CD4-positive, alpha-beta T cell (primary cell): ENCODE measurements at regions of chr11 and their contacts with region 1.

Region 1: DNA sequence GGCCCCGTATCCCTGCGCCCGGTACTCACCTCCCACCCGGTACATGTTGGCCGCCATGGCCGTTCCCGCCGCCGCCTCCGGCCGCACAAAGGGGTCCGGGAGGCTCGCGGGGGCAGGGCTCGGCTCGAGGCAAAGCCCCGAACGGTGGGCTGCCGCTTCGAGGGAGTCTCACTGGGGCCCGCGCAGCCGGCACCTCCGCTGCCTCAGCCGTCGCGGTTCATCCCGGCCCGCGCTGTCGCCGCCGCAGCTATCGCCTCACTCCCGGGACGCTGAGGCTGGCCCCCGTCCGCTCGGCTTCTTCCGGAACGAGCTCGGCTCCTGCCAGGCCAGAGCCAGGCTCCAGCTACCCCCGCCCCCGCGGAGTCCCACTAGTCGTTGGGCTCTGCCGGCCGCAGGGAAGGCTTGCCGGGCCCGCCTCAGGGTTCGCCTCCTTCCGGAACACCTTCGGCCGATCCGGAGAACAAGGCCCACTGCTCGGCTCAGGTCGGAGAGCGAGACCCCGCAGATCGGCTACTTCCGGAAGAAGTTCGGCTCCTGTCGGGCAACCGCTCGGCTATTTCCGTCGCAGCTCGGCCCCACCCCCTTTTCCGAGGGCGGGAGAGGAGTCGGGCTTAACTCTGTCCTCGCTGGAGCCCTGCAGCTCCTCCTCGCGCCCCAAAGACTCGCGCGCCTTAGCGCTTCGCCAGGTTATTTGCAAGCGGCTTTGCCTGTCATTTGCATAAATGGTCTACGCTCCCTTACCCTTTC is at the start of gene MTA2:
- DNase-seq: peak; percentile 98 to 100 (median 99)
- ATAC-seq: peak; percentile 79
- H3K4me3 ChIP-seq: peak within 1 kb of the TSS; percentile 100
- H3K4me3 Mint-ChIP-seq: peak within 1 kb of the TSS; percentile 94
- H3K27ac ChIP-seq: peak within 1 kb of the TSS; percentile 85 to 94
- H3K27ac Mint-ChIP-seq: peak within 1 kb of the TSS; percentile 93
- H3K4me1 ChIP-seq: peaks cover 46% of the 10 kb centered on the region
- H3K4me1 Mint-ChIP-seq: peaks cover 56% of the 10 kb centered on the region
- H3K27me3 ChIP-seq: no peaks in the 10 kb centered on the region
- H3K27me3 Mint-ChIP-seq: no peaks in the 10 kb centered on the region
- CTCF ChIP-seq: no peak
- total RNA-seq, gene MTA2: 167 to 172 TPM

Region 2: GRCh38 chr11:62621567-62622470 is 20.3 kb after region 1 on chr11 and contains the start of gene B3GAT3:
- CTCF ChIA-PET with region 1: no interaction called
- POLR2A ChIA-PET with region 1: interaction called, 36 read pairs
- intact Hi-C with region 1: no loop called
- DNase-seq: peak; percentile 91 to 99 (median 95)
- ATAC-seq: peak; percentile 82
- H3K4me3 ChIP-seq: peak within 1 kb of the TSS; percentile 69
- H3K4me3 Mint-ChIP-seq: peak within 1 kb of the TSS; percentile 95
- H3K27ac ChIP-seq: peak within 1 kb of the TSS; percentile 86 to 88
- H3K27ac Mint-ChIP-seq: peak within 1 kb of the TSS; percentile 89
- H3K4me1 ChIP-seq: peaks cover 32% of the 10 kb centered on the region
- H3K4me1 Mint-ChIP-seq: peaks cover 27% of the 10 kb centered on the region
- H3K27me3 ChIP-seq: no peaks in the 10 kb centered on the region
- H3K27me3 Mint-ChIP-seq: no peaks in the 10 kb centered on the region
- CTCF ChIP-seq: no peak
- total RNA-seq, gene B3GAT3: 47.2 to 49.5 TPM

Region 3: GRCh38 chr11:62652161-62653006 is 50.8 kb after region 1 on chr11:
- CTCF ChIA-PET with region 1: no interaction called
- POLR2A ChIA-PET with region 1: interaction called, 12 read pairs
- intact Hi-C with region 1: loop called in 1 of 2 experiments (anchors 2 kb)
- DNase-seq: peak in 4 of 14 experiments; percentile 43 to 62 (median 51)
- ATAC-seq: peak; percentile 5
- H3K4me3 ChIP-seq: peak overlapping the region; percentile 96
- H3K4me3 Mint-ChIP-seq: peak overlapping the region; percentile 94
- H3K27ac ChIP-seq: peak overlapping the region; percentile 89 to 94
- H3K27ac Mint-ChIP-seq: peak overlapping the region; percentile 97
- H3K4me1 ChIP-seq: peaks cover 28% of the 10 kb centered on the region
- H3K4me1 Mint-ChIP-seq: peaks cover 17% of the 10 kb centered on the region
- H3K27me3 ChIP-seq: no peaks in the 10 kb centered on the region
- H3K27me3 Mint-ChIP-seq: no peaks in the 10 kb centered on the region
- CTCF ChIP-seq: no peak

Region 4: DNA sequence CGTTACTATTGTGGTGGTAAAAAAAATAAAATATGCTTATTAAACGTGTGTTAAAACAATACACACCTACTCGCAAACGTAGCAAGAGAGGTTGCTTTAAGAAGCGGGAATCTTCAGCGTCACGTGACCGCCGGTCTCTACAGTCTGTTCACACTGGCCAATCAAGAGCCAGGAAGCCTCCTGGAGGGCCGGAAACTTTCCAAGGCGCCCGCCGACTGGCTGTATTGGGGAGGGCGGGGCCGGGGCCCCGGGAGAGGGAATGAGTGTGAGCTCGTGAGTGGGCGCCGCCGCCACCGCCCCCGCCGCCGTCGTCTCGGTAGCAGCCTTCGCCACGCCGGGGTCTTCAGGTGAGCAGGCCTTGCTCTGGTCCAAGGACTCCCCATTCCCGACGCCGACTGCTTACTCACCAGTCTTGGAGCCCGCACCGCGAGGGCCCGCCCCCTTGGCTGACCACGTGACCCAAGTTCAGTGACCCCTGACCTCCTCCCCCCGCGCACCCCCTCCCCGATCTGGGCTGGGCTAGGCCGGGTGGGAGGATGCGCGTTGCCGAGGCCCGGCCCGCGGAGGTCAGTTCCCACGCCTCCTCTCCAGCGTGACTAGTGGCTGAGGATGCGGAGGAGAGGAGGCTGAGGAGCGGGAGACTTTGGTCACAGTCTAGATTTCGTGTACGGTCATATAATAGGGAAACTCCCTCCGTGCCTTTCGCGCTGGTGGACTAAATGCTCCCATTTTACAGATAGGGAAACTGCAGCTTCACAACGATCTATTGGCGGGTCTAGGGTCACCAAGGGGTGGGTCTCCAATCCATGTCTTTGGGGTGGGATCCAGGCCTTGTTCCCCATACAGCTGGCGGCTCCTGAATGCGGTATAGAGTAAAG is 169.8 kb after region 1 on chr11 and contains the start of gene TAF6L:
- CTCF ChIA-PET with region 1: no interaction called
- POLR2A ChIA-PET with region 1: interaction called, 4 read pairs
- intact Hi-C with region 1: loop called in 1 of 2 experiments (anchors 10 kb)
- DNase-seq: peak; percentile 81 to 95 (median 88)
- ATAC-seq: peak; percentile 76
- H3K4me3 ChIP-seq: peak within 1 kb of the TSS; percentile 76
- H3K4me3 Mint-ChIP-seq: peak within 1 kb of the TSS; percentile 97
- H3K27ac ChIP-seq: peak within 1 kb of the TSS; percentile 79 to 88
- H3K27ac Mint-ChIP-seq: peak within 1 kb of the TSS; percentile 97
- H3K4me1 ChIP-seq: peaks cover 27% of the 10 kb centered on the region
- H3K4me1 Mint-ChIP-seq: peaks cover 24% of the 10 kb centered on the region
- H3K27me3 ChIP-seq: no peaks in the 10 kb centered on the region
- H3K27me3 Mint-ChIP-seq: no peaks in the 10 kb centered on the region
- CTCF ChIP-seq: no peak
- total RNA-seq, gene TAF6L: 11.5 to 11.8 TPM

Region 5: GRCh38 chr11:62860835-62861563 is 259.4 kb after region 1 on chr11:
- CTCF ChIA-PET with region 1: no interaction called
- POLR2A ChIA-PET with region 1: interaction called, 14 read pairs
- intact Hi-C with region 1: loop called in 1 of 2 experiments (anchors 5 kb)
- DNase-seq: no peak
- ATAC-seq: no peak
- H3K4me3 ChIP-seq: no peak overlapping the region
- H3K4me3 Mint-ChIP-seq: no peak overlapping the region
- H3K27ac ChIP-seq: no peak overlapping the region
- H3K27ac Mint-ChIP-seq: no peak overlapping the region
- H3K4me1 ChIP-seq: peaks cover 18% of the 10 kb centered on the region
- H3K4me1 Mint-ChIP-seq: peaks cover 18% of the 10 kb centered on the region
- H3K27me3 ChIP-seq: no peaks in the 10 kb centered on the region
- H3K27me3 Mint-ChIP-seq: no peaks in the 10 kb centered on the region
- CTCF ChIP-seq: no peak